CD14-positive monocyte (primary cell): ENCODE measurements at regions of chr9 and their contacts with region 1.

Region 1: DNA sequence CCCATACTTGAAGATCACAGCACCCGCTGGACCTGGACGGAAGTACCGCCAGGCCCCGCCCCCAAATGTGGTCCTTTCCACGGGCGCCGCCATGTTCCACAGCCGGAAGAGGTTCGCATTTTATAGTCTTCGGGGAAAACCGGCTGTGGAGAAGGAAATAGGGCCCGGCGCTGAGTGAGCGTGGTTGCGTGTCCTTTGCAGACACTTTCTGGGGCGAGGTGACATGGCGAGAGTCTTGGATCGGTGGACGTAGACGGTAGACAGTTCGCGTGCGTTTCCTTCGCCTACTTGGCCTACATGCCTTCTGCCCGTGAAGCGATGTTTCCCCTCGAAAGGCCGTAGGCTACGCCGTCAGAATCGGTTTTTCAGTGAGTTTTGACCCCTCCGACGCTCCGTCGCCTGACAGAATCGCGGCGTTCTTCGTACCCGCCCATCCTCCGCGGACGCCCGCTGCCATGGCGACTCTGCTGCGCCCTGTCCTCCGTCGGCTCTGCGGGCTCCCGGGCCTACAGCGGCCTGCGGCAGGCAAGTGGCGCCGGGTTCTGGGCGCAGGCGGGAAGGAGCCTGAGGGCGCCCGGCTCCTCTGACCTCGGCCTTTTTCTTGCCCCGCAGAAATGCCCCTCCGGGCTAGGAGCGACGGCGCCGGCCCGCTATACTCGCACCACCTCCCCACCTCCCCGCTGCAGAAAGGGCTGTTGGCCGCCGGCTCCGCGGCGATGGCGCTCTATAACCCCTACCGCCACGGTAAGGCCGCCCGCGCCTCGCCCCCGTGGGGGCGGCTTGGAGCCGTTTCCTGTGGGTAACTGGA is at the starts of genes COQ4 and TRUB2:
- DNase-seq: peak; percentile 90 to 92 (median 91)
- H3K4me3 ChIP-seq: peak within 1 kb of the TSS; percentile 58 to 96 (median 76)
- H3K4me3 Mint-ChIP-seq: peak within 1 kb of the TSS; percentile 90 to 95
- H3K27ac ChIP-seq: peak within 1 kb of the TSS; percentile 86
- H3K27ac Mint-ChIP-seq: peak within 1 kb of the TSS; percentile 95 to 99 (median 97)
- H3K4me1 ChIP-seq: peaks cover 20 to 23% of the 10 kb centered on the region in 2 donors
- H3K4me1 Mint-ChIP-seq: peaks cover 14% of the 10 kb centered on the region
- H3K27me3 ChIP-seq: no peaks in the 10 kb centered on the region
- H3K27me3 Mint-ChIP-seq: peaks cover 0 to 3% (median 0%) of the 10 kb centered on the region in 3 donors
- CTCF ChIP-seq: no peak
- polyA plus RNA-seq, gene COQ4: 19.9 to 32.6 (median 20.4) TPM
- polyA plus RNA-seq, gene TRUB2: 5.9 to 17.0 (median 13.5) TPM

Region 2: GRCh38 chr9:128275996-128276573 is 46.5 kb before region 1 on chr9 and contains the starts of genes GOLGA2 and SWI5:
- intact Hi-C with region 1: loop called (anchors 5 kb)
- DNase-seq: peak; percentile 99 to 100 (median 100)
- H3K4me3 ChIP-seq: peak within 1 kb of the TSS; percentile 61 to 90 (median 88)
- H3K4me3 Mint-ChIP-seq: peak within 1 kb of the TSS; percentile 94 to 97
- H3K27ac ChIP-seq: peak within 1 kb of the TSS; percentile 47 to 91
- H3K27ac Mint-ChIP-seq: peak within 1 kb of the TSS; percentile 91 to 98 (median 94)
- H3K4me1 ChIP-seq: peaks cover 24 to 28% of the 10 kb centered on the region in 2 donors
- H3K4me1 Mint-ChIP-seq: peaks cover 34% of the 10 kb centered on the region
- H3K27me3 ChIP-seq: no peaks in the 10 kb centered on the region
- H3K27me3 Mint-ChIP-seq: peaks cover 0 to 6% (median 0%) of the 10 kb centered on the region in 3 donors
- CTCF ChIP-seq: no peak
- polyA plus RNA-seq, gene GOLGA2: 2.9 to 34.2 (median 4.6) TPM
- polyA plus RNA-seq, gene SWI5: 14.4 to 18.0 (median 16.2) TPM

Region 3: DNA sequence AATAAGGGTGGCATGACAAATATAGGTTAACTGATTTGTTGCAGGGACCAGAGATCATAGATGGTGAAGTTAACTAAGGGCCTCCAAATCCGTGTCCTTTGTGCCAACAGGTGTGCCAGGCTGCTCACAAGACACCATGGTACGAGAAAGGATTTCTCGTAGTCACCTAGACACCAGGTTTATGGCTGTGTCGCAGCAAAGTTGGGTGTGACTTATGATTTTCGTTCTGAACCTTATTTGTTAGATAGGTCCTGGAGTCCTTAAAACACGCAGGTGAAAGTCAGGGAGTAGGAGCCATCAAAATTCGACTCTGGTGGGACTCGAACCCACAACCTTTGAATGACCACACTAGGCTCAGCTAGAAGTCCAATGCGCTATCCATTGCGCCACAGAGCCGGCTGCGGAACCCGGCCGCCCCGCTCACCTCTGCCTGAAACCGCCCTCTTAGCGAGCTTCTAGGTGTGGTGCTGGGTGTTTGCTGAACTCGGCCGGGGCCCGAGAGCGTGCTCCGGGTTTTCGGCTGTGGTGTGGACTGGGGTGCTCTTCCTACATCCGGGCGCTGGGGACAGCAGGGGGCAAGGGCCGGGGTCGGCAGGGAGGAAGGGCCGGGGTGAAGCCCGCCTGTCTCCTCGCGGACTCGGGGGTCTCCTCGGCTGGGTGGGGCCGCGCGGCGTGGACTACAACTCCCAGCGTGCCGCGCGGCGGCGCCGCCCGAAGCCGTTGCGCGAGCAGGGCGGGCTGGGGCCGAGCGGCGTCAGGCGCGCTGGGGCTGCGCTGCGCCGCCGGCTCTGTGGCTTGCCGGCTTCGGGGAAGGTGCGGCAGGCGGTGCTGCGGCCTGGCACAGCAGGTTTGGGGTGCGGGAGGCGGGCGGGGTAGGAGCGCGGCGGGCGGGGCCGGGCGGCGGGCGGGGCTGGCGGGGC is 17.4 kb after region 1 on chr9 and contains the start of gene SLC27A4:
- intact Hi-C with region 1: loop called in 1 of 2 experiments (anchors 2 kb)
- DNase-seq: peak; percentile 32 to 68 (median 49)
- H3K4me3 ChIP-seq: peak within 1 kb of the TSS; percentile 65 to 90 (median 81)
- H3K4me3 Mint-ChIP-seq: peak within 1 kb of the TSS; percentile 84 to 95
- H3K27ac ChIP-seq: peak within 1 kb of the TSS; percentile 16 to 59
- H3K27ac Mint-ChIP-seq: peak within 1 kb of the TSS in 6 of 7 donors; percentile 19 to 87 (median 81)
- H3K4me1 ChIP-seq: peaks cover 12 to 15% of the 10 kb centered on the region in 2 donors
- H3K4me1 Mint-ChIP-seq: peaks cover 13% of the 10 kb centered on the region
- H3K27me3 ChIP-seq: no peaks in the 10 kb centered on the region
- H3K27me3 Mint-ChIP-seq: peaks cover 0 to 3% (median 0%) of the 10 kb centered on the region in 3 donors
- CTCF ChIP-seq: no peak
- polyA plus RNA-seq, gene SLC27A4: 6.8 to 8.9 (median 6.8) TPM

Region 4: DNA sequence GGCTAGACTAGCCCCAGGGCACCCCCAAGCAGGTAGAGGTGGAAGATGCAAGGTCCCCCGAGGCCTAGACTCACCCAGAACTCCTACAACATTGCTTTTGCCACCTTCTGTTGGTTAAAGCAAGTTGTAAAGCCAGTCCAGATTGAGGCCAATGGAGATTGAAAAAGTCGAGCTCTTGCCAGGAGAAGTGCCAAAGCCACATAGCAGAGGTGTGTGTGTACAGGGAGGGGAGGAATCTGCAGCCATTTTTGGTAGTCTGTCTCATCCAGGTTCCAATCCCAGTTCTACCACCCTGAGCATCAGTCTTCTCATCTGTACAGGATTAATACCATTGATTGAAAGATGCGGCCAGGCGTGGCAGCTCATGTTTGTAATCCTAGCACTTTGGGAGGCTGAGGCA is 36.3 kb after region 1 on chr9:
- intact Hi-C with region 1: no loop called
- DNase-seq: no peak
- H3K4me3 ChIP-seq: no peak overlapping the region
- H3K4me3 Mint-ChIP-seq: no peak overlapping the region
- H3K27ac ChIP-seq: no peak overlapping the region
- H3K27ac Mint-ChIP-seq: peak overlapping the region in 1 of 7 donors; percentile 63
- H3K4me1 ChIP-seq: peaks cover 10 to 11% of the 10 kb centered on the region in 2 donors
- H3K4me1 Mint-ChIP-seq: peaks cover 9% of the 10 kb centered on the region
- H3K27me3 ChIP-seq: no peaks in the 10 kb centered on the region
- H3K27me3 Mint-ChIP-seq: peaks cover 0 to 5% (median 0%) of the 10 kb centered on the region in 3 donors
- CTCF ChIP-seq: no peak

Region 5: DNA sequence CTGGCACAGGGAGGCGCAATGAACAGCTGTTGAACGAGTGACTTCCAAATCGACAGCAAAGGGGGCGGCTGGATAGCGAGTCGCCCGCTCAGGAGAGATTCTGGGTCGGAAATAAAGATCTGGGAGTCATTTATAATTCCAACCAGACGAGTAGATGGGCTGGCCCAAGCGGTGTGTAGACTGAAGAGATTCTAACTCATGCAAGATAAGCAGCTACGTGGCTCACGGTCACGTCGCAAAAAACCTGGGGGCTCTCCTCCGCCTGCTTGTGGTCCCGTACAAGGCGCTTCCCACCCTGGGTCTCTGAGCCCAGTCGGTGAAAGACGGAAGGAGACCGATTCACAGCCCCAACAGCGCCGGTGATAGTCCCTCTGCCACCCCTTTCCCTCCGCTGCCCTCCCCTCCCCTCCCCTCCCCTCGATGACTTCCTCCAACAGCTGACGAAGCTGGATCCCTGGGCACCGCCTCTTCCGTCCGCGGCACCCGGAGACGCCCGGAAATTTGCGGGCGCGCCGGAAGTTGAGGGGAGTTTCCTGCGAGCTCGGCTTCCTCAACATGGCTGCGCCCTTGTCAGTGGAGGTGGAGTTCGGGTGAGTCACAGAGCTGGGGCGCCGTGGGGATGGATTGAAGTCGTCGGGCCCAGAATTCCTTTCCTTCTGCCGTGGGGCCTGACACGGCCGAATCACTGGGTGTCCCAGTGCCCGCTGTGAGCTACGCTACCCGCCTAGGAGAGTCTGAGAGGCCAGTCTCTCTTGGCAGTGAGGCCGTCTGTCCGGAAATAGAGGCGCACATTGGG is 48.4 kb after region 1 on chr9 and contains the start of gene URM1:
- intact Hi-C with region 1: loop called (anchors 2 to 10 kb)
- DNase-seq: peak; percentile 96 to 99 (median 99)
- H3K4me3 ChIP-seq: peak within 1 kb of the TSS; percentile 75 to 94 (median 93)
- H3K4me3 Mint-ChIP-seq: peak within 1 kb of the TSS; percentile 89 to 96
- H3K27ac ChIP-seq: peak within 1 kb of the TSS; percentile 83 to 99
- H3K27ac Mint-ChIP-seq: peak within 1 kb of the TSS; percentile 96 to 99 (median 98)
- H3K4me1 ChIP-seq: peaks cover 20 to 22% of the 10 kb centered on the region in 2 donors
- H3K4me1 Mint-ChIP-seq: peaks cover 30% of the 10 kb centered on the region
- H3K27me3 ChIP-seq: no peaks in the 10 kb centered on the region
- H3K27me3 Mint-ChIP-seq: peaks cover 0 to 3% (median 0%) of the 10 kb centered on the region in 3 donors
- CTCF ChIP-seq: no peak
- polyA plus RNA-seq, gene URM1: 37.5 to 39.7 (median 38.3) TPM